Mammary epithelial cell (primary cell): ENCODE measurements at regions of chr10 and their contacts with region 1.

Region 1: DNA sequence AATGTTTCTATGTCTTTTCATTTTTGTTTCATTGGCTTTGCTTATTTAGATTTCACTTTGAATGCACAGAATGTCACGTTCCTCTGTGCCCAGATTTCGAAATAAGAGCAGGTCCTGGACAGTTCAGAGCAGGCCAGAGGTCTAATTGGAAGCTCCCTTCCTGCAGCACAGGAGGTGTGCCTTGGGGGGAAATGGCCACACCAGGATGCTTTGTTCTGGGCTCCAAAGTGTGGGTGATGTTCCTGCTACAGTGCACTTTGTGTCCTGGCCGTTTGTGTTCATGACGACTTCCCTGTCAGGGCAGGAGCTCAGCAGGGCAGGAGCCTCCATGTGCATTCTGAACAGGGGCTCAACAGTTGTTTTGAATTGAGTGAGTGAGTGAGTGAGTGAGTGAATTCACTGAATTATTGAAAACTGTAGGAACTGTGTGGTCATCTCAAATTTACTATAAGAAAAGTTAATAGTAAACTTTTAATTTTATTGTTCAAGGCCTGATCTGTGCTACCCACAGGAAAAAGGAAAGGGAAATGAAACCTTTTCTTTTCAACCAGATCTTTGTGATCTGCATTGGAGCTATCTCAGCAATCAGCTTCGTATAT is 109.5 kb upstream of the GJD4 start:
- DNase-seq: peak; percentile 4
- H3K4me3 ChIP-seq: no peak overlapping the region
- H3K27ac ChIP-seq: no peak overlapping the region
- H3K4me1 ChIP-seq: peaks cover 10% of the 10 kb centered on the region
- H3K27me3 ChIP-seq: no peaks in the 10 kb centered on the region
- CTCF ChIP-seq: no peak

Region 2: DNA sequence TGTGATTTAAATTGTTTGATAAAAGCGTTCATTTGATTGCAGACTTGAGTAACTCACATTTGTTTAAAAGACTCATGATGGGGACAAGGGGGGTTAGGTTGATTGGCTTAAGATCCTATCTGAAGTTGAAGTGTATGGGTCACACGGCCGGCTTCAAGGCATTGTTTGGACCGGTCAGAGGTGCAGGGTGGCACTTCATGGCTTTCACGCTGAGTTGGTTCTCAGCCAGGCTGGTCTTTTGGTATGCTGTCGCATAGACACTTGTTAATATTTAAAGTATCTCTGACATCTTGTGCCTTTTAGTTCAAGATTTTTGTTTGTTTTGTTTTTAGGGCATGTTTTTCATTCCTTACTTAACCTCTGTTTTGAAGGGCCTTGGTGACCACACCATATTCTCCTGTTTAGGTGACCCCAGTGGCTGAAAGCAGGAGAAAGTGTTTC is 101.2 kb before region 1 on chr10:
- CTCF ChIA-PET with region 1: no interaction called
- dilution Hi-C with region 1: loop called (anchors 5 kb)
- in situ Hi-C with region 1: no loop called
- intact Hi-C with region 1: no loop called
- DNase-seq: no peak
- H3K4me3 ChIP-seq: no peak overlapping the region
- H3K27ac ChIP-seq: no peak overlapping the region
- H3K4me1 ChIP-seq: no peaks in the 10 kb centered on the region
- H3K27me3 ChIP-seq: no peaks in the 10 kb centered on the region
- CTCF ChIP-seq: no peak

Region 3: GRCh38 chr10:35480142-35480541 is 15.5 kb before region 1 on chr10:
- CTCF ChIA-PET with region 1: no interaction called
- dilution Hi-C with region 1: no loop called
- in situ Hi-C with region 1: no loop called
- intact Hi-C with region 1: no loop called
- DNase-seq: no peak
- H3K4me3 ChIP-seq: no peak overlapping the region
- H3K27ac ChIP-seq: no peak overlapping the region
- H3K4me1 ChIP-seq: no peaks in the 10 kb centered on the region
- H3K27me3 ChIP-seq: no peaks in the 10 kb centered on the region
- CTCF ChIP-seq: no peak